Body of pancreas (tissue), 4 donors: ENCODE measurements at regions of chr7 and their contacts with region 1.

Region 1: GRCh38 chr7:38107486-38107893 is 70.6 kb upstream of the STARD3NL start:
- DNase-seq: peak; percentile 73 to 82 (median 78)
- ATAC-seq: peak; percentile 76
- H3K4me3 ChIP-seq: no peak overlapping the region
- H3K27ac ChIP-seq: no peak overlapping the region
- H3K4me1 ChIP-seq: peaks cover 3% of the 10 kb centered on the region
- H3K27me3 ChIP-seq: no peaks in the 10 kb centered on the region
- CTCF ChIP-seq: peak; percentile 65 to 76 (median 72)
- POLR2A ChIP-seq: no peak

Region 2: DNA sequence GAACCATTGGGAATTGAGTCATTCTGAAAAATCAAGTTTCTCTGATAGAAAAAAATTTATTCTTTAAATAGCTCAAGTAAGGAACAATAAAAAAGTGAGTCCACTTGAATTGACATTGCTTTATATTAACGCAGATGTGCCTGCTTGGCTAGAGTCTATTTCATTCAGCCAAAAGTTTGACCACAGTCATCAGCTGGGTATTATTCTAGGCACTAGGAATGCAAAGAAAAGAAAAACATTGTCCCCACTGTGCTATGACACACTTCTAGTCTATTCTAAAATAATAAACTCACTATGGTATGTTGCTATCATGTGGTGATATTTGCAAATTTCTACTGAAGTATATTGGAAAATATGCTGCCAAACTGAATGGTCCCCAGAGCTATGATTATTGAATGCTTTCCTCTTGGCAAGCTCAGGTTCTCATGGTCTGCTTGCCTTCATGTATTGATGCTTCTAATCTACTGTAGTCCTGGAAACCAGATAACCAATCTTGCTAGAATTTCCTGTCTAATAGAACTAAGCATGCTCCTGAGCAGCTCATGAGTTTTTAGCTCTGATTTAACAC is 199.2 kb before region 1 on chr7:
- intact Hi-C with region 1: loop called (anchors 5 kb)
- DNase-seq: no peak
- ATAC-seq: no peak
- H3K4me3 ChIP-seq: no peak overlapping the region
- H3K27ac ChIP-seq: no peak overlapping the region
- H3K4me1 ChIP-seq: no peaks in the 10 kb centered on the region
- H3K27me3 ChIP-seq: no peaks in the 10 kb centered on the region
- CTCF ChIP-seq: no peak
- POLR2A ChIP-seq: no peak

Region 3: GRCh38 chr7:37920305-37920848 is 187.1 kb before region 1 on chr7 and contains the start of gene EPDR1:
- intact Hi-C with region 1: no loop called
- DNase-seq: peak; percentile 75 to 87 (median 84)
- ATAC-seq: peak; percentile 82
- H3K4me3 ChIP-seq: peak within 1 kb of the TSS; percentile 74 to 93
- H3K27ac ChIP-seq: peak within 1 kb of the TSS; percentile 91 to 96 (median 93)
- H3K4me1 ChIP-seq: peaks cover 51% of the 10 kb centered on the region
- H3K27me3 ChIP-seq: peaks cover 0 to 3% of the 10 kb centered on the region in 2 donors
- CTCF ChIP-seq: peak in 6 of 7 experiments; percentile 26 to 73 (median 58)
- POLR2A ChIP-seq: peak; percentile 51 to 88 (median 87)
- total RNA-seq, gene EPDR1: 17.6 to 24.7 TPM

Region 4: GRCh38 chr7:37930226-37930948 is 177.1 kb before region 1 on chr7:
- intact Hi-C with region 1: no loop called
- DNase-seq: no peak
- ATAC-seq: no peak
- H3K4me3 ChIP-seq: no peak overlapping the region
- H3K27ac ChIP-seq: no peak overlapping the region
- H3K4me1 ChIP-seq: peaks cover 7% of the 10 kb centered on the region
- H3K27me3 ChIP-seq: no peaks in the 10 kb centered on the region
- CTCF ChIP-seq: no peak
- POLR2A ChIP-seq: no peak

Region 5: DNA sequence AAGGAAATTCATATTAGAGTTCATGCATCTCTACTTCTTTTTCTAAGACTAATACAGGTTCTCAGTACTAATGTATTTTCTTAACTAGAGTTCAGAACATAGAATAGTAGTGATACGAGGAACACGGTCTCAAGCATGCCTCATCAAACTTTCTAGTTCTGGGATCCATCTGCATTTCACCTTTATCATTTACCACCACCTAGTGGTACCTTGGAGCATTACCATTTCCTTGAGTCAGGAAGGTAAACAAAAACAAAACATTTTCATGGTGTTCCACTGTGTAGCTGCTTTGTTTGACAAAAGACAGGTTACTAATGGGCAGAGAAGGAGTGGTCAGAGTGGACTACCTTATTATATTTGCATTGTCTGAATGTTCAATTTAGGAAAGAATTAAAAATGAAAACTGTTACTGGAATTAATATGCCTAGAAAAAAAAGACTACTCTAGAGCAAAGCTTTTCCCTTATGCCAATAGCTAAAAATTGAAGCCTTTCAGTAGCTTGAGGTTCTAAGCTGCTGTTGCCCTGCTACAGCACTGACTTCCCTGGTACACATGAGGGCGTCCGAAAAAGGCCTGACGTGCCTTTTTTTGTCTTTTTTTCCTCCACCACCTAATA is 115.1 kb after region 1 on chr7:
- intact Hi-C with region 1: loop called (anchors 5 kb)
- DNase-seq: peak in 2 of 4 donors; percentile 36 to 56
- ATAC-seq: peak; percentile 85
- H3K4me3 ChIP-seq: no peak overlapping the region
- H3K27ac ChIP-seq: no peak overlapping the region
- H3K4me1 ChIP-seq: no peaks in the 10 kb centered on the region
- H3K27me3 ChIP-seq: no peaks in the 10 kb centered on the region
- CTCF ChIP-seq: peak; percentile 61 to 97 (median 95)
- POLR2A ChIP-seq: no peak